A673 (cell line): ENCODE measurements at regions of chr2 and their contacts with region 1.

Region 1: GRCh38 chr2:79041032-79041448 is 15.5 kb downstream of the REG3G start:
- DNase-seq: peak; percentile 51
- H3K4me3 ChIP-seq: no peak overlapping the region
- H3K27ac ChIP-seq: no peak overlapping the region
- H3K4me1 ChIP-seq: no peaks in the 10 kb centered on the region
- H3K27me3 ChIP-seq: no peaks in the 10 kb centered on the region
- CTCF ChIP-seq: peak; percentile 79

Region 2: GRCh38 chr2:79219383-79219988 is 178.4 kb after region 1 on chr2:
- CTCF ChIA-PET with region 1: interaction called, 8 read pairs
- POLR2A ChIA-PET with region 1: no interaction called
- intact Hi-C with region 1: loop called (anchors 1 kb)
- DNase-seq: peak; percentile 64
- H3K4me3 ChIP-seq: no peak overlapping the region
- H3K27ac ChIP-seq: no peak overlapping the region
- H3K4me1 ChIP-seq: no peaks in the 10 kb centered on the region
- H3K27me3 ChIP-seq: no peaks in the 10 kb centered on the region
- CTCF ChIP-seq: peak; percentile 89

Region 3: DNA sequence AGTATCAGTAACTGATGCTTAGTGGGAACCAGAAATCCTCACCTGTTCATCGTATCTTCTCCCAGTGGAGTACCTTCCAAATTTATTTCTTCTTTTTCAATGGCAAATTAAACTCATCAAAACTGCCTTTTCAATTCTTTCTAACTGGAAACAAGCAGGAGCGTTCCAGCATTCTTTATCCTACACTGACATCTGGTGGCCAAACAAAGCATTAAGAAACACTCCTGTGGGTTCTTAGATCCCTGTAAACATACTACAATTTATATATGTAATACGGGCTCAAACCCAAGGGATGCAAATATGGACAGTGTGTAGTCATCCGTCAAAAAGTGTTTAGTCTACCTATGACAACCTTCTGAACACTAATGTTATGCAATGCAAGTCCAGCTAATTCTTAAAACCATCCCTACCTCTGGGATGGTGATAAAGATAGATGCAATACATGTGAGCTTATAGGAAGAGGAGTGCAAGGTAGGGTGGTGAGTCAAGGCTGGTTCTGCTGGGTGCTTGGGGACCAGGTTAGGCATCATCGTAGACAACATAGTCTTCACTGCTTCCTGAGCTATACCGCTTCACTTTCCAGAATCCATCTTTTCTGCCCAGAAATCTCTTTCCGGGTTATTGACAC is 846.8 kb after region 1 on chr2:
- CTCF ChIA-PET with region 1: no interaction called
- POLR2A ChIA-PET with region 1: no interaction called
- intact Hi-C with region 1: loop called (anchors 5 kb)
- DNase-seq: peak; percentile 73
- H3K4me3 ChIP-seq: no peak overlapping the region
- H3K27ac ChIP-seq: no peak overlapping the region
- H3K4me1 ChIP-seq: no peaks in the 10 kb centered on the region
- H3K27me3 ChIP-seq: peaks cover 3% of the 10 kb centered on the region
- CTCF ChIP-seq: peak; percentile 79